CD8-positive, alpha-beta T cell (primary cell): ENCODE measurements at regions of chr15 and their contacts with region 1.

Region 1: DNA sequence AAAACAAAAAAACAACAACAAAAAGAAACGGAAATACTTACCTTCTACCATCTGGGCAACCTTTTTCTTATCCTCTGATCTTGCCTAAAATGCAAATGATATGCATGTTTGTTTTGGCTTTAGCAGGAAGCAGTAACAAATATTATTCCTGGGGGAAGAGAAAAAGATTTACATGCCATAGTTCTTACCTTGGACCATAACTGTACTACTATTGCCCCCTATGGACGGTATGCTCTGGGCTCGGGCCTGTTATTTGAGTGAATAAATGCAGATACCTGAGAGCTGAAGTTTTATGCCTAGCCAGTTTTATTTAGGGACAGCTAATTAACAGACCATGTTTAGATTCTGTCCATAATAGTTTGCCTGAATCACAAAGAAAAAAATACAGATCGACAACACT is 12.6 kb upstream of the STARD5 start:
- DNase-seq: peak in 7 of 9 experiments; percentile 28 to 69 (median 46)
- ATAC-seq: peak; percentile 49
- H3K4me3 ChIP-seq: no peak overlapping the region
- H3K4me3 Mint-ChIP-seq: no peak overlapping the region
- H3K27ac ChIP-seq: no peak overlapping the region
- H3K27ac Mint-ChIP-seq: no peak overlapping the region
- H3K4me1 ChIP-seq: no peaks in the 10 kb centered on the region
- H3K4me1 Mint-ChIP-seq: peaks cover 15% of the 10 kb centered on the region
- H3K27me3 ChIP-seq: no peaks in the 10 kb centered on the region
- H3K27me3 Mint-ChIP-seq: no peaks in the 10 kb centered on the region
- CTCF ChIP-seq: peak; percentile 37

Region 2: DNA sequence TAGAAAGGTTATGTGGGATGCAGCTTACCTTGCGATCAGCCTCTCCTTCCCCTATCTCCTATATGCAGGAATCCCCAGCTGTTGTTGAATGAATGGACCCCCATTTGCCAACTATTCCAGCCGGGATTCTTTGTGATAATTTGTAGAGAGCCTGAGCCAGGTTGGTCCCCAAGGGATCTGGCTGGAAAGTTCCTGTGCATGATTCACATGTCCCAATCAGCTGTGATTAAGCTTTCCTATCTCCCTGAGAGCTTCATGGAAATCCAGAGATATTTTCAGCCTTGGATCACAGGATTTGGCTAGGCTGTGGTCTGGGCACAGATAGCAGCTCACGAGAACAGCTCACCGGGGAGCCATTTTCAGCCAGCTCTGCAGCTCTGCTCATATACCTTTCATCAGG is 855.7 kb before region 1 on chr15:
- CTCF ChIA-PET with region 1: no interaction called
- POLR2A ChIA-PET with region 1: no interaction called
- intact Hi-C with region 1: no loop called
- DNase-seq: no peak
- ATAC-seq: no peak
- H3K4me3 ChIP-seq: no peak overlapping the region
- H3K4me3 Mint-ChIP-seq: no peak overlapping the region
- H3K27ac ChIP-seq: no peak overlapping the region
- H3K27ac Mint-ChIP-seq: no peak overlapping the region
- H3K4me1 ChIP-seq: no peaks in the 10 kb centered on the region
- H3K4me1 Mint-ChIP-seq: no peaks in the 10 kb centered on the region
- H3K27me3 ChIP-seq: no peaks in the 10 kb centered on the region
- H3K27me3 Mint-ChIP-seq: peaks cover 2% of the 10 kb centered on the region
- CTCF ChIP-seq: no peak

Region 3: GRCh38 chr15:81106560-81106959 is 230.0 kb before region 1 on chr15:
- CTCF ChIA-PET with region 1: no interaction called
- POLR2A ChIA-PET with region 1: no interaction called
- intact Hi-C with region 1: loop called in 1 of 2 experiments (anchors 2 kb)
- DNase-seq: peak in 5 of 9 experiments; percentile 32 to 67 (median 45)
- ATAC-seq: no peak
- H3K4me3 ChIP-seq: no peak overlapping the region
- H3K4me3 Mint-ChIP-seq: no peak overlapping the region
- H3K27ac ChIP-seq: no peak overlapping the region
- H3K27ac Mint-ChIP-seq: no peak overlapping the region
- H3K4me1 ChIP-seq: no peaks in the 10 kb centered on the region
- H3K4me1 Mint-ChIP-seq: no peaks in the 10 kb centered on the region
- H3K27me3 ChIP-seq: no peaks in the 10 kb centered on the region
- H3K27me3 Mint-ChIP-seq: peaks cover 23% of the 10 kb centered on the region
- CTCF ChIP-seq: peak; percentile 69

Region 4: GRCh38 chr15:81296673-81297072 is 39.9 kb before region 1 on chr15:
- CTCF ChIA-PET with region 1: interaction called, 23 read pairs
- POLR2A ChIA-PET with region 1: interaction called, 3 read pairs
- intact Hi-C with region 1: no loop called
- DNase-seq: peak; percentile 50 to 94 (median 79)
- ATAC-seq: peak; percentile 46
- H3K4me3 ChIP-seq: peak overlapping the region; percentile 88 to 89
- H3K4me3 Mint-ChIP-seq: peak overlapping the region; percentile 92
- H3K27ac ChIP-seq: peak overlapping the region; percentile 84 to 92
- H3K27ac Mint-ChIP-seq: peak overlapping the region; percentile 98
- H3K4me1 ChIP-seq: peaks cover 55% of the 10 kb centered on the region
- H3K4me1 Mint-ChIP-seq: peaks cover 72% of the 10 kb centered on the region
- H3K27me3 ChIP-seq: no peaks in the 10 kb centered on the region
- H3K27me3 Mint-ChIP-seq: no peaks in the 10 kb centered on the region
- CTCF ChIP-seq: no peak